ENCODE measurements at regions of chr22 and their contacts with region 1.

Region 1: GRCh38 chr22:17830043-17830961 is 56.0 kb upstream of the BID start:
- DNase-seq: peak; percentile 59 to 87 (median 78)
- ATAC-seq: peak; percentile 94
- H3K4me3 ChIP-seq: no peak overlapping the region
- H3K4me3 Mint-ChIP-seq: no peak overlapping the region
- H3K27ac ChIP-seq: no peak overlapping the region
- H3K27ac Mint-ChIP-seq: peak overlapping the region in 2 of 9 donors; percentile 28 to 65
- H3K4me1 ChIP-seq: peaks cover 0 to 6% of the 10 kb centered on the region in 2 donors
- H3K4me1 Mint-ChIP-seq: peaks cover 0 to 10% (median 8%) of the 10 kb centered on the region in 7 donors
- H3K27me3 ChIP-seq: no peaks in the 10 kb centered on the region
- H3K27me3 Mint-ChIP-seq: no peaks in the 10 kb centered on the region

Region 2: DNA sequence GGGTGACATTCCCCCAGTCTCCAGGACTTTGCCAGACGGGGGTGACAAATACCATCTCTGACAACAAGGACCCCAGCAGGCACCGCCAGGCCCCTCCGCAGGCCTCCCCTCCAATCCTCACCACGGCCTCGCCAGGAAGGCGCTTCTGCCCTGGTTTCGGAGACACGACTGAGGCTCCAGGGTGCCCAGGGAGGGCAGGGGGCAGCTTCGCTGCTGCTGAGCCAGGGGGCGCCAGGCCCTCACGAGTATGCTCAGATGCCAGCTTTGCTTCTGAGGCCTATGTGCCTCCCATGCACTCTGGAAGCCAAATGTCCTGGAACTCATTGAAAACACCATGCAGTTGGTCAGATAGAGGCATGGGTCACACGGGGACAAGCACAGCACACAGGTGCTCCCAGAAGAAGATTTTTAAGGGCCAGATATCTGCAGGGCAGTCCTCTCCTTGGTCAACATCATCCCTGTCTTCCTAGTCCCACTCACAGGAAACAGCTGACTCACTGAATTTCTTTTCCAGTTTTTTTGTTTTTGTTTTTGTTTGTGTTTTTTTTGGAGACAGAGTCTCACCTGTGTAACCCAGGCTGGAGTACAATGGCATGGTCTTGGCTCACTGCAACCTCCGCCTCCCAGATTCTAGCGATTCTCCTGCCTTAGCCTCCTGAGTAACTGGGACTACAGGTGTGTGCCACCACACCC is 75.9 kb before region 1 on chr22:
- CTCF ChIA-PET with region 1: no interaction called
- POLR2A ChIA-PET with region 1: no interaction called
- intact Hi-C with region 1: loop called in 1 of 2 experiments (anchors 2 kb)
- DNase-seq: peak in 4 of 9 donors; percentile 24 to 45 (median 30)
- ATAC-seq: peak; percentile 54
- H3K4me3 ChIP-seq: no peak overlapping the region
- H3K4me3 Mint-ChIP-seq: no peak overlapping the region
- H3K27ac ChIP-seq: no peak overlapping the region
- H3K27ac Mint-ChIP-seq: peak overlapping the region in 3 of 9 donors; percentile 38 to 43 (median 40)
- H3K4me1 ChIP-seq: no peaks in the 10 kb centered on the region
- H3K4me1 Mint-ChIP-seq: peaks cover 0 to 23% (median 7%) of the 10 kb centered on the region in 7 donors
- H3K27me3 ChIP-seq: no peaks in the 10 kb centered on the region
- H3K27me3 Mint-ChIP-seq: no peaks in the 10 kb centered on the region

Region 3: DNA sequence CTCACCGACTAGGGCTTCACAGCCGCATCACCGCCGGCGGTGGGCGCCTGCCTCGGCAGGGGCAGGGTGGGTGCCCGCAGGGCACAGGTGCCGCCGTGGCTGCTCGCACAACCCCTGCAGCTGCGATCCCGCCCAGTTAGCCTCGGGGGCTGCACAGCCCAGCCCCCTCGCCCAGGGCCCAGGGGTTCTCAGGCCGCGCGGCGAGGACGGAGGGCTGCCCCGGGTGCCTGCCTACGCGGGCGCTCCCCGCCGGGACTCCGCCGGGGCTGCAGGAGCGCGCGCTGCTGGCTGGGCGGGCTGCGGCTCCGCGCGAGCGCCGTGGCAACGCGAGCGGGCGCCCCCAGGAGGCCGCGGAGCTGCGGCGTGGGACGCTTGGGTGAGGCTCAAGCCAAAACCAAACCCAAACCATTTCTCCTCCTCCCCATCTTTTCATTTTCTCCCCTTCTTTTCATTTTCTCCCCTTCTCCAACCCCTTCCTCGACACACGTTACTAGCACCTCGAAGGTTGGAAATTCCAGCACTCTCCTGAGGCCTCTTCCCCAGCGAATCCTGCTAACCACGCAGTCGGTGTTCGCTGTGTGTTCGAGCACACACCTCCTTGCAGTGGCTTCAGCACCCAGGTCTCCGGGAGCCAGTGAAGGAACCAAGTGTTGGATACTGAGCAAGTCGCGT is 194.1 kb after region 1 on chr22 and contains the start of gene MICAL3:
- CTCF ChIA-PET with region 1: interaction called, 10 read pairs
- POLR2A ChIA-PET with region 1: no interaction called
- intact Hi-C with region 1: loop called (anchors 1 kb)
- DNase-seq: peak in 8 of 9 donors; percentile 22 to 79 (median 58)
- ATAC-seq: peak; percentile 95
- H3K4me3 ChIP-seq: peak within 1 kb of the TSS; percentile 57
- H3K4me3 Mint-ChIP-seq: peak within 1 kb of the TSS; percentile 76 to 95 (median 88)
- H3K27ac ChIP-seq: no peak within 1 kb of the TSS
- H3K27ac Mint-ChIP-seq: no peak within 1 kb of the TSS
- H3K4me1 ChIP-seq: peaks cover 0 to 4% of the 10 kb centered on the region in 2 donors
- H3K4me1 Mint-ChIP-seq: peaks cover 5 to 17% (median 10%) of the 10 kb centered on the region in 7 donors
- H3K27me3 ChIP-seq: no peaks in the 10 kb centered on the region
- H3K27me3 Mint-ChIP-seq: peaks cover 42 to 72% (median 49%) of the 10 kb centered on the region in 5 donors
- total RNA-seq, gene MICAL3: 10.0 to 43.9 (median 17.1) TPM

Region 4: GRCh38 chr22:18152519-18152918 is 322.2 kb after region 1 on chr22:
- CTCF ChIA-PET with region 1: interaction called, 3 read pairs
- POLR2A ChIA-PET with region 1: no interaction called
- intact Hi-C with region 1: loop called in 1 of 2 experiments (anchors 5 kb)
- DNase-seq: peak in 2 of 9 donors; percentile 14 to 38
- ATAC-seq: no peak
- H3K4me3 ChIP-seq: no peak overlapping the region
- H3K4me3 Mint-ChIP-seq: peak overlapping the region; percentile 63 to 90 (median 72)
- H3K27ac ChIP-seq: no peak overlapping the region
- H3K27ac Mint-ChIP-seq: peak overlapping the region; percentile 16 to 92 (median 78)
- H3K4me1 ChIP-seq: peaks cover 9 to 32% of the 10 kb centered on the region in 2 donors
- H3K4me1 Mint-ChIP-seq: peaks cover 31 to 70% (median 51%) of the 10 kb centered on the region in 7 donors
- H3K27me3 ChIP-seq: no peaks in the 10 kb centered on the region
- H3K27me3 Mint-ChIP-seq: no peaks in the 10 kb centered on the region

Measured in naive thymus-derived CD4-positive, alpha-beta T cell (primary cell).